Calu3 (cell line): ENCODE measurements at regions of chr1 and their contacts with region 1.

Region 1: DNA sequence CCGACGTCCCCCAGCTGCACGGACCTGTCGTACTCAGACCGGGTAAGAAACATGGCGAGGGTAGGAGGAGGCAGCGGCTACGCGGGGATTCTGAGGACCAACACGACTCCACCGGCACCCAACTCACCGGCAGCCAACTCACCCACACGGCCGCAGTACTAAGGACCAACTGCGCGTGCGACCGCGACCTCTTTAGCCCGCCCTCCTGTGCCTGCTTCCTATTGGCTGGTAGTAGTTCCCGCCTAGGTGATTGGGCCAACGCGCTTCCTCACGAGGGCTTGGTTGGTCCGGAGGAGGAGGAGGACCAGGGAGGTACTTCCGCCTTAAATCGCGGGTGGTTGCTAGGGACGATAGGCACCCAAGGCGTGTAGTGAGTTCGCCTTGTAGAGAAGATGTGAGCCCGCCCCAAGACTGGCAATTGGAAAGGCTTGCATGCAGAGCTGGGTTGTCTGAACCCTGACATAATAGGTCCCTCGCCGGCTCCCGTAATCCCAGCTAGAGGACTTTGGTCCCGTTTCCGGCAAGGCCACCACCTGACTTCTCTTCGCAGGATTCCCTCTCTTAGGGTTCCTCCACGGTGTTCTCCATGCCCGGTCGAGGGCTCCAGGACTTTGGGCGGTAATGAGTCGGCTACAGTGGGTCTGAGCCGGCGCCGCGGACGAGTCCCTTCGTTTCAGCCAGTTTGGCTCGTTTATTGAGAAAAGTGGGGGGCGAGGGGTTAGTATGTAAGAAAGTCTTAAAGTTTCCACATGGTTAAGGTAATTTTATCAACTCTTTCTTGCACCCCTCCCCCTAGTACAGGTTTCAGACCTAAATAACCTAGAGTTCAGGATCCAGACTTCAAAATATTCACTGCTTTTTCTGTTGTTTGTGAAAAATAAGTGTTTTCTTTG is at the start of gene PSMA5:
- DNase-seq: peak; percentile 92
- H3K4me3 Mint-ChIP-seq: peak within 1 kb of the TSS; percentile 89
- H3K27ac Mint-ChIP-seq: peak within 1 kb of the TSS; percentile 89
- H3K4me1 Mint-ChIP-seq: peaks cover 22% of the 10 kb centered on the region
- H3K27me3 Mint-ChIP-seq: no peaks in the 10 kb centered on the region
- CTCF ChIP-seq: no peak
- total RNA-seq, gene PSMA5: 108 and 121 TPM in 2 replicates

Region 2: GRCh38 chr1:109290998-109291397 is 135.5 kb before region 1 on chr1:
- CTCF ChIA-PET with region 1: no interaction called
- intact Hi-C with region 1: no loop called
- DNase-seq: no peak
- H3K4me3 Mint-ChIP-seq: no peak overlapping the region
- H3K27ac Mint-ChIP-seq: no peak overlapping the region
- H3K4me1 Mint-ChIP-seq: no peaks in the 10 kb centered on the region
- H3K27me3 Mint-ChIP-seq: peaks cover 16% of the 10 kb centered on the region
- CTCF ChIP-seq: no peak

Region 3: GRCh38 chr1:109466452-109467300 is 40.2 kb after region 1 on chr1 and contains the start of gene SYPL2:
- CTCF ChIA-PET with region 1: interaction called, 4 read pairs
- intact Hi-C with region 1: loop called (anchors 5 kb)
- DNase-seq: peak; percentile 25
- H3K4me3 Mint-ChIP-seq: peak within 1 kb of the TSS; percentile 55
- H3K27ac Mint-ChIP-seq: no peak within 1 kb of the TSS
- H3K4me1 Mint-ChIP-seq: no peaks in the 10 kb centered on the region
- H3K27me3 Mint-ChIP-seq: peaks cover 95% of the 10 kb centered on the region
- CTCF ChIP-seq: no peak
- total RNA-seq, gene SYPL2: 0.20 TPM in 1 of 2 replicates, not detected in the other

Region 4: GRCh38 chr1:109483672-109484518 is 57.4 kb after region 1 on chr1 and contains the start of gene ATXN7L2:
- CTCF ChIA-PET with region 1: interaction called, 3 read pairs
- intact Hi-C with region 1: loop called (anchors 2 kb)
- DNase-seq: peak; percentile 83
- H3K4me3 Mint-ChIP-seq: peak within 1 kb of the TSS; percentile 92
- H3K27ac Mint-ChIP-seq: peak within 1 kb of the TSS; percentile 88
- H3K4me1 Mint-ChIP-seq: peaks cover 10% of the 10 kb centered on the region
- H3K27me3 Mint-ChIP-seq: peaks cover 46% of the 10 kb centered on the region
- CTCF ChIP-seq: no peak
- total RNA-seq, gene ATXN7L2: 4.3 and 4.5 TPM in 2 replicates